Dendritic cell treated with granulocyte-macrophage colony-stimulating factor and Interleukin-4, amounts not matched to agents 40 ng/mL and 50 ng/mL, for 4 days (primary cell): ENCODE measurements at regions of chr13 and their contacts with region 1.

Region 1: GRCh38 chr13:51832471-51833152 is 12.4 kb downstream of the TMEM272 start:
- H3K4me3 Mint-ChIP-seq: no peak overlapping the region
- H3K27ac Mint-ChIP-seq: no peak overlapping the region
- H3K4me1 Mint-ChIP-seq: peaks cover 52% of the 10 kb centered on the region
- H3K27me3 Mint-ChIP-seq: peaks cover 3% of the 10 kb centered on the region

Region 2: GRCh38 chr13:51814825-51815650 is 17.6 kb before region 1 on chr13:
- intact Hi-C with region 1: loop called (anchors 1 kb)
- H3K4me3 Mint-ChIP-seq: peak overlapping the region; percentile 35
- H3K27ac Mint-ChIP-seq: peak overlapping the region; percentile 10
- H3K4me1 Mint-ChIP-seq: peaks cover 59% of the 10 kb centered on the region
- H3K27me3 Mint-ChIP-seq: no peaks in the 10 kb centered on the region